Stomach (tissue), 19 donors: ENCODE measurements at regions of chr11 and their contacts with region 1.

Region 1: DNA sequence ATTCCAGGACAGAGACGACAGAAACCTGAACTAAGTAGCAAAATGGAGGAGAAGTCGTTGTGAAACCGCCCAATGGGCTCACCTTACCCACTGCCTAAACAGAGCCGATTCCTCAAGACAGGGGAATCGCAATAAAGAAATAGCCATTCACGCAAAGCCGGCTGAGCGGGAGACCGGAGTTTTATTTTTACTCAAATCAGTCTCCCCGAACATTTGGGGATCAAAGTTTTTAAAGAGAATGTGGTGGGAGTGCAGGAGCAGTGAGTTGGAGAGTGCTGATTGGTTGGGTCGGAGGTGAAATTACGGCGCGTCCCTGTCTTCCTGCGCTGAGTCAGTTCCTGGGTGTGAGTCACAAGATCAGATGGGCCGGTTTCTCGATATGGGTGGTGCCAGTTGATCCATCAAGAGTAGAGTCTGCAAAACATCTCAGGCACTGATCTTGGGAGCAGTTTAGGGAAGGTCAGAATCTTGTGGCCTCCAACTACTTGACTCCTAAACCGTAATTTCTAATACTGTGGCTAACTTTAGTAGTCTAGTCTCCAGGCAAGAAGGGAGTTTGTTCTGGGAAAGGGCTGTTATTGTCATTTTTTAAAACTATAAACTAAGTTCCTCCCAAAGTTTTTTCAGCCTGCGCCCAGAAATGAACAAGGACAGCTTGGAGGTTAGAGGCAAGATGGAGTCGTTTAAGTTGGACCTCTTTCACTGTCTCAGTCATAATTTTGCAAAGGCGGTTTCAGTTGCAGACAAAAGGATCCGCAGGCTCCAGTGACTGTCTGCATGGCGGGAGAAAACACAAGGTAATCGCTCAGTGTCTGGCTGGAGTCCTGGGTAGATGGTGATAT is 34.1 kb downstream of the OR4D9 start:
- DNase-seq: no peak
- H3K4me3 ChIP-seq: no peak overlapping the region
- H3K27ac ChIP-seq: no peak overlapping the region
- H3K4me1 ChIP-seq: peaks cover 0 to 14% (median 4%) of the 10 kb centered on the region in 4 donors
- H3K27me3 ChIP-seq: no peaks in the 10 kb centered on the region
- CTCF ChIP-seq: no peak
- EP300 ChIP-seq: no peak
- POLR2A ChIP-seq: no peak

Region 2: DNA sequence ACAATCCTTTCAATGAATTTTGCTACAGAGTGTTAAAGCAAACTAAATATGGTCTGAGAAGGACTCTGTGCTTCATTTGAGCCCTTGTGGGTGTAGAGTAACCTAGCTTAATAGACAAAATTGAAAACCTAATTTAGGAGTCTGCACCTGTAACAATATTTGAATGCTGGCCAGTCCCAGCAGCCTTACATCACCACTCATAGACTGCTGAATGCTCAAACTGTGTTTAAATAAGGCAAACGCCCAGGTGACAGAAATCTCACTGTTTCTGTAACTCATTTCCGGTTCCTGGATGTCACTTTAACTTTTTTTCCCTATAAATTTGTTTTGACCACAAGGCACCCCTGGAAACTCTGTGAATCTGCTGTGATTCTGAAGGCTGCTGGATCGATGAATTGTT is 504.8 kb before region 1 on chr11:
- intact Hi-C with region 1: no loop called
- DNase-seq: no peak
- H3K4me3 ChIP-seq: no peak overlapping the region
- H3K27ac ChIP-seq: no peak overlapping the region
- H3K4me1 ChIP-seq: no peaks in the 10 kb centered on the region
- H3K27me3 ChIP-seq: no peaks in the 10 kb centered on the region
- CTCF ChIP-seq: no peak
- EP300 ChIP-seq: no peak
- POLR2A ChIP-seq: no peak

Region 3: DNA sequence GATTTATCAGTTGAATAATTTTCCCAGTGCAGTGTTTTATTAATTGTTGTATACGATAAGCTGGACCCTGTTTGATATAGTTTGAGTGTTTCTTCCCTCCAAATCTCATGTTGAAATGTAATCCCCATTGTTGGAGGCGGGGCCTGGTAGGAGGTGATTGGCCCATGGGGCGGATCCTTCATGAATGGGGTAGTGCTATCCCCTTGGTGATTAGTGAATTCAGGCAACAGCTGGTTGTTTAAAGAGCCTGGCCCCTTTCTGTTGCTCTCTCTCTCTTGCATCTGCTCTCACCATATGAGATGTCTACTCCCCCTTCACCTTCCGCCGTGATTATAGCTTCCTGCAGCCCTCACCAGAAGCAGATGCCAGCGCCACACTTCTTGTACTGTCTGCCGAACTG is 107.6 kb before region 1 on chr11:
- intact Hi-C with region 1: no loop called
- DNase-seq: no peak
- H3K4me3 ChIP-seq: no peak overlapping the region
- H3K27ac ChIP-seq: no peak overlapping the region
- H3K4me1 ChIP-seq: no peaks in the 10 kb centered on the region
- H3K27me3 ChIP-seq: no peaks in the 10 kb centered on the region
- CTCF ChIP-seq: no peak
- EP300 ChIP-seq: no peak
- POLR2A ChIP-seq: no peak

Region 4: GRCh38 chr11:59582006-59582405 is 36.6 kb after region 1 on chr11:
- intact Hi-C with region 1: no loop called
- DNase-seq: no peak
- H3K4me3 ChIP-seq: no peak overlapping the region
- H3K27ac ChIP-seq: no peak overlapping the region
- H3K4me1 ChIP-seq: peaks cover 0 to 6% (median 2%) of the 10 kb centered on the region in 4 donors
- H3K27me3 ChIP-seq: no peaks in the 10 kb centered on the region
- CTCF ChIP-seq: no peak
- EP300 ChIP-seq: no peak
- POLR2A ChIP-seq: no peak

Region 5: GRCh38 chr11:59641156-59641555 is 95.8 kb after region 1 on chr11:
- intact Hi-C with region 1: no loop called
- DNase-seq: no peak
- H3K4me3 ChIP-seq: no peak overlapping the region
- H3K27ac ChIP-seq: no peak overlapping the region
- H3K4me1 ChIP-seq: no peaks in the 10 kb centered on the region
- H3K27me3 ChIP-seq: no peaks in the 10 kb centered on the region
- CTCF ChIP-seq: no peak
- EP300 ChIP-seq: no peak
- POLR2A ChIP-seq: no peak

Region 6: DNA sequence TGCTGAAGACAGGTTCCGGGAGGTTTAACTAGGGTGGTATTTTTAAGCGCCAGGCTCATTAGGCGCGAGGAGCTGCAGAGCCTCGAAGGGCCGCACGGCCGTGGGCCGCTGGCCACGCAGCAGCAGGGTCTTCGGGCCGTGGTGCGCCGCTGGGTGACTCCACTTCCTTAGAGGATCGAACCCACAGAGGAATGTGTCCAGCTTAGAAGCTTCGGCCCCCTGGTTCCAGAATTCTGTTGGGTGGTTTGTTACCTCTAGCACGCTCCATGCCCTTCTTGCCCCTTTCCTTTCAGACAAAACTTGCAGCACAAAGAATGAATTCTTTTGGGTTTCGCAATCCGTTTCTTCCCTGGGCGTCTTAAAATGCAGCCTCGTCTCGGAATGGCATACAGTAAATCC is 124.2 kb after region 1 on chr11:
- intact Hi-C with region 1: loop called (anchors 10 kb)
- DNase-seq: peak in 1 of 2 donors; percentile 34
- H3K4me3 ChIP-seq: peak overlapping the region; percentile 80 to 92 (median 90)
- H3K27ac ChIP-seq: peak overlapping the region; percentile 97 to 99 (median 98)
- H3K4me1 ChIP-seq: peaks cover 19 to 47% (median 36%) of the 10 kb centered on the region in 4 donors
- H3K27me3 ChIP-seq: no peaks in the 10 kb centered on the region
- CTCF ChIP-seq: no peak
- EP300 ChIP-seq: no peak
- POLR2A ChIP-seq: no peak